Naive thymus-derived CD4-positive, alpha-beta T cell (primary cell): ENCODE measurements at regions of chr1 and their contacts with region 1.

Region 1: DNA sequence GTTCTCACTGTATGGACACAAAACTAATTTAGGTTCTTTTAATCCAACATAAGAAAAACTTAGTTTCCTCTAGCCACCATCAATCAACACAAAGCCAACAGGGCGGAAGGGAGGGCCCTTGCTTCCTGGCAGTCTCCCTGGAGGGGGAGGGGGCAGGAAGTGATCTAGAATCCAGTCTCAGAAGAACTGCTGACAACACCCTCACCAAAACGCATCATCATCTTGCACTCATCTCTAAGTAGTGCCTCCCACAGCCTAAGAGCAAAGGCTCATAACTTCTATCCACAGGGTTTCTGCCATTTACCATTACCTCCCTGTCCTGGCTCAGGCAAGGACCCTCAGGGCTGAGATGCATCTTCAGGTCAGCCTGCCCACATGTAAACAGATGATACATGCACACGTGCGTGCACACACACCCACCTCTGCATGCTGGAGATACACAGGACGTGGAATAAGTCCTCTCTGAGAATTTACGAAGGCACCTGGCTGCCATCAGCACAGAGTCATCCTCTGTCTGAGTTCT is 20.5 kb downstream of the HIVEP3 start:
- DNase-seq: peak; percentile 31 to 96 (median 89)
- ATAC-seq: peak; percentile 98
- H3K4me3 ChIP-seq: peak overlapping the region; percentile 40
- H3K4me3 Mint-ChIP-seq: peak overlapping the region; percentile 53 to 84 (median 74)
- H3K27ac ChIP-seq: peak overlapping the region; percentile 65
- H3K27ac Mint-ChIP-seq: peak overlapping the region; percentile 87 to 99 (median 95)
- H3K4me1 ChIP-seq: peaks cover 36 to 74% of the 10 kb centered on the region in 2 donors
- H3K4me1 Mint-ChIP-seq: peaks cover 46 to 90% (median 73%) of the 10 kb centered on the region in 7 donors
- H3K27me3 ChIP-seq: no peaks in the 10 kb centered on the region
- H3K27me3 Mint-ChIP-seq: no peaks in the 10 kb centered on the region

Region 2: GRCh38 chr1:41773144-41773591 is 125.1 kb before region 1 on chr1:
- CTCF ChIA-PET with region 1: no interaction called
- POLR2A ChIA-PET with region 1: no interaction called
- intact Hi-C with region 1: no loop called
- DNase-seq: no peak
- ATAC-seq: no peak
- H3K4me3 ChIP-seq: no peak overlapping the region
- H3K4me3 Mint-ChIP-seq: no peak overlapping the region
- H3K27ac ChIP-seq: no peak overlapping the region
- H3K27ac Mint-ChIP-seq: no peak overlapping the region
- H3K4me1 ChIP-seq: no peaks in the 10 kb centered on the region
- H3K4me1 Mint-ChIP-seq: peaks cover 0 to 11% (median 0%) of the 10 kb centered on the region in 7 donors
- H3K27me3 ChIP-seq: no peaks in the 10 kb centered on the region
- H3K27me3 Mint-ChIP-seq: no peaks in the 10 kb centered on the region

Region 3: DNA sequence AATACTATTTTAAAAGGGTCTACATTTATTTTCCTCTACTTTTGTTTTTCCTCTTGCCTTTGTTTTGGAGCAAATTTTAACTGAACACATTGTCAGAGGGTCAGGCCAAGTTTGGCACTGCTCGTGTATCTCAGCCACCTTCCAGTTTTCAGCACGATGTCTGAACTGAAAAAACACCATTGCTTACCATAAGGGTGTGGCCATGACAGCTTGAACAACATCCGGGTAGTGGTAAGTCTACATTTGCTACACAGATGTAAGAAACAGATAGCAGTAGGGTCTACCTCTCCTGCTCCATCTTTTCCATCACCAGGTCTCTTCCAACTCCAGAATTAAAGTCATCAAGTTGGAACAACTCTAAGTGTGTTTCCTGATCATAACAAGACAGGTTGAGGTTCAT is 16.3 kb after region 1 on chr1:
- CTCF ChIA-PET with region 1: interaction called, 38 read pairs
- POLR2A ChIA-PET with region 1: interaction called, 344 read pairs
- intact Hi-C with region 1: loop called (anchors 1 kb)
- DNase-seq: peak in 7 of 9 donors; percentile 29 to 63 (median 52)
- ATAC-seq: peak; percentile 64
- H3K4me3 ChIP-seq: no peak overlapping the region
- H3K4me3 Mint-ChIP-seq: peak overlapping the region; percentile 39 to 97 (median 73)
- H3K27ac ChIP-seq: no peak overlapping the region
- H3K27ac Mint-ChIP-seq: peak overlapping the region; percentile 70 to 96 (median 84)
- H3K4me1 ChIP-seq: peaks cover 59 to 70% of the 10 kb centered on the region in 2 donors
- H3K4me1 Mint-ChIP-seq: peaks cover 50 to 76% (median 66%) of the 10 kb centered on the region in 7 donors
- H3K27me3 ChIP-seq: no peaks in the 10 kb centered on the region
- H3K27me3 Mint-ChIP-seq: peaks cover 0 to 15% (median 0%) of the 10 kb centered on the region in 5 donors